H1 (cell line): ENCODE measurements at regions of chr2 and their contacts with region 1.

Region 1: DNA sequence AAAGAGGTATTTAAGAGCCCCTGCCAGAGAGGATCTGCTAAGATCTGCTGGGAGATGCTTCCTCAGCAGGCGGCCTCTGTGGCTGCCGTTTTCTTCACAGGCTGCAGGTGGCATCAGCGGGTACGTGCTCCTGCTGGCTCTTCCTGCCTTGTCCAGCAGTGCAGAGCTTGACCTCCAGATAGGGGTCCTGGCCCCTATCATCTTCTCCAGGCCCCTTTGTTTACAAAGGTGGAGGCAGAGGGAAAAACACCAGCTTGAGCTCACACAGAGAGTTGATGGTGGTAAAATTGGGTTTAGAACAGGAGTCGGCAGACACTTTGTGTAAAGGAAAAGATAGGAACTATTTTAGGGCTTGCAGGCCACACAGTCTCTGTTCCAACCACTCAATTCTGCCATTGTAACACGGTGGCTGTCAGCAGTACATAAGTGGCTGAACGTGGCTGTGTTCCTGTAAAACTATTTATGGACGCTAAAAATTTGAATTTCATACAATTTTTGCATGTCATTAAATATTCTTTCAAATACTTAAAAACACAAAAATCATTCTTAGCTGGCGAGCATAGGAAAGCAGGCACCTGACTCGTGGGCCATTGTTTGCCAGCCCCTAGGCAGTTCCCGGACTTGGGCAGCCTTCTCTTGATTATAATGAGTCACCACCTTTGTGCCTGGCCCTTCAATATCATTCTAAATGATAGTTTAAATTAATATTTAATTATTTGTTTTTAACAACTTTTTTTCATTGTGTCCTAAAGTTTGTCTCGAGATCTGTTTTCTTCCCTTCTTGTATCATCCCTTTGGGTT is 98.2 kb upstream of the B3GNT7 start:
- DNase-seq: peak; percentile 31 to 77
- H3K4me3 ChIP-seq: no peak overlapping the region
- H3K27ac ChIP-seq: no peak overlapping the region
- H3K4me1 ChIP-seq: peaks cover 0 to 9% (median 3%) of the 10 kb centered on the region in 4 experiments; a peak in 2 of 7 replicates
- H3K27me3 ChIP-seq: no peaks in the 10 kb centered on the region
- CTCF ChIP-seq: peak; percentile 89 to 96 (median 90)
- EP300 ChIP-seq: no peak
- POLR2A ChIP-seq: no peak
- RAD21 ChIP-seq: peak; percentile 84

Region 2: DNA sequence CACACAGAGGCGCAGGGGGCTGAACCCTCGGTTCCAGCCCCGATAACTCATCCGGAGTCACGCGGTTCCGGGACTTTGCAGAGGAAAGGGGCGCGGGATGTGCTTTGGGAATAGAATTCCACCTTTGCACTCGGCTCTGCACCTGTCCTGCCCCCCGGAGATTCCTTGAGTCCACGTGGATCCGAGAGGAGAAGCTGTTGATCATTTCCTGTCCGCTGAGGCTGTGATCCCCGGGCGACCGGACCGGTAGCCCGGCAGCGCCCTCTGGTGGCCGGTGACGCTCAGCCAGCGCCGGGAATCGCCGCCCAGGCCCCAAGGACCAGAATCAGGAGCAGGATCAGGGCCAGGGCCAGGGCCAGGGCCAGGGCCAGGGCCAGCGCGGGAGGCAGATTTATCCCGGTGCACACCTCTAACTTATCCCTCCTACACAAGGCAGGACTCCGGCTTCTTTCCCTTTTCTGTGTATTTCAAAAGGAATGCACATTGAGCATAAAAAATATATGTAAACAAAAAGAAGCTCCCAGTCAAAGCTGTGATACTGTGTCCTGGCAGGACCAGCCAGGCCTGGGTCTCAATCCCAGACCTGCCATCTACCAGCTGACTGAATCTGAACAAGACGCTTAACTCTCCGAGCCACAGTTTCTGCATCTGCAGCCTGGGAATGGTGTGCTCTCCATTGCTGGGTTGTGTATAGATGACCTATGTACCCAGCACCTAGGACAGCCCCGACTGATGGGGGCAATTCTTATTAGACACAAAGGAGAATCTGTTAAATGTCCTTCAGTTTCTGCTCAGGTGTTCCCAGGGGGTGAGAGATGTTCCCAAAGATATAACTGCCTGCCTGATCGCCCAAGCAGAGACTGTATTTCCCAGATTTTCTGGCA is 309.9 kb before region 1 on chr2:
- CTCF ChIA-PET with region 1: no interaction called
- POLR2A ChIA-PET with region 1: no interaction called
- DNase-seq: peak; percentile 38 to 98
- H3K4me3 ChIP-seq: peak overlapping the region in 3 of 4 experiments; percentile 30 to 52 (median 30); a peak in 6 of 8 replicates
- H3K27ac ChIP-seq: no peak overlapping the region
- H3K4me1 ChIP-seq: peaks cover 0 to 11% (median 5%) of the 10 kb centered on the region in 4 experiments; a peak in 5 of 7 replicates
- H3K27me3 ChIP-seq: peaks cover 0 to 4% (median 2%) of the 10 kb centered on the region in 4 experiments; a peak in 2 of 7 replicates
- CTCF ChIP-seq: peak; percentile 93 to 97 (median 95)
- EP300 ChIP-seq: no peak
- POLR2A ChIP-seq: no peak
- RAD21 ChIP-seq: peak; percentile 92 to 94

Region 3: GRCh38 chr2:231037731-231038482 is 259.4 kb before region 1 on chr2:
- CTCF ChIA-PET with region 1: no interaction called
- POLR2A ChIA-PET with region 1: no interaction called
- DNase-seq: peak in 1 of 2 experiments; percentile 58
- H3K4me3 ChIP-seq: peak overlapping the region; percentile 33 to 71 (median 46)
- H3K27ac ChIP-seq: no peak overlapping the region
- H3K4me1 ChIP-seq: peaks cover 0 to 6% (median under 1%) of the 10 kb centered on the region in 4 experiments; a peak in 4 of 7 replicates
- H3K27me3 ChIP-seq: peaks cover 24 to 36% (median 33%) of the 10 kb centered on the region in 4 experiments
- CTCF ChIP-seq: peak; percentile 1 to 33 (median 7)
- EP300 ChIP-seq: no peak
- POLR2A ChIP-seq: no peak
- RAD21 ChIP-seq: no peak; a peak in 1 of 4 replicates

Region 4: DNA sequence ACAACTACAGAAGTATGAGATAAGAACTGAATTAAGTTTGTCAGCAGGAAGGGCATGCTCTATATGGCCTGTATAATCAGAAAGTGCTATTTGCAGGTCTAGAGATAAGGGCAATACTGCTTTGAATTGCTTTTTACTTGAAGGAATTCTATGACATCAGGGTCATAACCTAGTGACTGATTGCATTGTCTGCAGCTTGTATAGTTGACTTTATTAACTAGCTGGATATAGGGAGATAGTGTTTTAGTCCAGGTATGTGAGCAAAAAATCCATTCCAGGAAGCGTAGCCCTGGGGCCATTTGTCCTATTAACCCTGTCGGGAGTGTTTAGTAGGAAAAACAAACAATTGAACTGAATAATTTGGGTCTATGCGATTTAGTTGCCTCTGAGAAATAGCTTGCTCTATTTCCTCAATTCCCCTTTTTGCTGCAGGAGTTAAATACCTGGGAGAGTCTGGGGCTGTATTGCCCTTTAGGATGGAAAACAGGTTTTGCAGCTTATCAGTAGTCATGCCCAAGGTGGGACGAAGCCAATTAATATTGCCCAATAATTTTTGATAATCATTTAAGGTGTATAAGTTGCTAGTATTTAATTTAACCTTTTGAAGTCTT is 202.5 kb before region 1 on chr2:
- CTCF ChIA-PET with region 1: no interaction called
- POLR2A ChIA-PET with region 1: no interaction called
- DNase-seq: no peak
- H3K4me3 ChIP-seq: no peak overlapping the region
- H3K27ac ChIP-seq: no peak overlapping the region
- H3K4me1 ChIP-seq: no peaks in the 10 kb centered on the region
- H3K27me3 ChIP-seq: no peaks in the 10 kb centered on the region
- CTCF ChIP-seq: no peak
- EP300 ChIP-seq: no peak
- POLR2A ChIP-seq: no peak
- RAD21 ChIP-seq: no peak

Region 5: DNA sequence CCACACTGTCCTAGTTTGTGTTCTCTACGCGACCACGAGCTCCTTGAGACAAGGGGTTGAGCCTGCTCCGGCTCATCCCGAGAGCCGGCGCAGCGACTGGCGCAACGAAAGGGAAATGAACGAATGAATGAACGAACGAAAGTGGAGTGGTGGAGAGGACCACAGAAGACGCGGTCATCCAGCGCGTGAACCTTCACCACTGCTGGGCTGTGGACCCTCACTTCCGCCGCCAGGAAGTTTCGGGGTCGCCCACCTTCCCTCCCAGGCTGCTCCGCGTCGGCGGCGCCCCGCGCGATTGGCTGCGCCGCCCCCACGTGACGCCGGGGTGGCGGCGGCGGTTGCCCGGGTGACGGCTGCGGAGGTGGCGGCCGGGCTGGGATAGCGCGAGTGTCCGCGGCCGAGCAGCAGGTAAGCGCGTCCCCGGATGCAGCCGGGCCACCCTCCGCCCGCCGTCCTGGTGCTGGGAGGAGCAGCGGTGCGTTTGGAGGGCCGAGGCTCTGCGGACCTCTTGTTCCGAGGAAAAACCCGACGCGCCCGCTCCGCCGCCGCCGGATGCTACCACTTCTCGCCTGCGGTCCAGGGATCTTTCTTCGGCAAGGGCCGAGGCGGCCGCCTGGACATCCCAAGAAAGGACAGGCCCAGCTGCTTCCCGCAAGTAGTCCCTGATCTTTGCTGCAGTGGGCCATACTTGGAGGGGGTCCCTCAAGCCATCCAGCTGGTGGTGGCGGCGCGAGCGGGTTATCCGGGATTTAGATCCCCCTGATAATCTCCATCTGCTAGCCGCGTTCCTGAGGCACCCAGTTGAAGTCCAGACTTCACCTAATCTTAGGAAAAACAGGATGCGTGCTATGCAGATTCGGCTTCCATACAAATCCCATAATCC is 98.8 kb before region 1 on chr2 and contains the start of gene ARMC9:
- CTCF ChIA-PET with region 1: no interaction called
- POLR2A ChIA-PET with region 1: no interaction called
- DNase-seq: peak in 1 of 2 experiments; percentile 91
- H3K4me3 ChIP-seq: peak within 1 kb of the TSS; percentile 79 to 91 (median 88)
- H3K27ac ChIP-seq: peak within 1 kb of the TSS; percentile 62
- H3K4me1 ChIP-seq: peaks cover 0 to 5% (median 2%) of the 10 kb centered on the region in 4 experiments; a peak in 3 of 7 replicates
- H3K27me3 ChIP-seq: no peaks in the 10 kb centered on the region
- CTCF ChIP-seq: no peak
- EP300 ChIP-seq: no peak
- POLR2A ChIP-seq: peak in 1 of 2 experiments; percentile 88; a peak in 2 of 3 replicates
- RAD21 ChIP-seq: no peak
- total RNA-seq, gene ARMC9: 33.0 and 36.1 TPM in 2 replicates

Region 6: GRCh38 chr2:231308631-231309428 is 11.5 kb after region 1 on chr2:
- CTCF ChIA-PET with region 1: interaction called, 28 read pairs
- POLR2A ChIA-PET with region 1: interaction called, 4 read pairs
- DNase-seq: no peak
- H3K4me3 ChIP-seq: no peak overlapping the region
- H3K27ac ChIP-seq: no peak overlapping the region
- H3K4me1 ChIP-seq: no peaks in the 10 kb centered on the region; a peak in 1 of 7 replicates
- H3K27me3 ChIP-seq: no peaks in the 10 kb centered on the region
- CTCF ChIP-seq: no peak
- EP300 ChIP-seq: no peak
- POLR2A ChIP-seq: no peak
- RAD21 ChIP-seq: no peak

Region 7: GRCh38 chr2:231334179-231334930 is 37.0 kb after region 1 on chr2:
- CTCF ChIA-PET with region 1: interaction called, 17 read pairs
- POLR2A ChIA-PET with region 1: no interaction called
- DNase-seq: no peak
- H3K4me3 ChIP-seq: no peak overlapping the region
- H3K27ac ChIP-seq: no peak overlapping the region
- H3K4me1 ChIP-seq: peaks cover 0 to 3% (median 1%) of the 10 kb centered on the region in 4 experiments; a peak in 2 of 7 replicates
- H3K27me3 ChIP-seq: no peaks in the 10 kb centered on the region
- CTCF ChIP-seq: no peak
- EP300 ChIP-seq: no peak
- POLR2A ChIP-seq: no peak
- RAD21 ChIP-seq: no peak

Region 8: GRCh38 chr2:231394211-231395141 is 97.2 kb after region 1 on chr2:
- CTCF ChIA-PET with region 1: interaction called, 37 read pairs
- POLR2A ChIA-PET with region 1: interaction called, 4 read pairs
- DNase-seq: peak in 1 of 2 experiments; percentile 78
- H3K4me3 ChIP-seq: peak overlapping the region in 2 of 4 experiments; percentile 46 to 74; a peak in 5 of 8 replicates
- H3K27ac ChIP-seq: no peak overlapping the region
- H3K4me1 ChIP-seq: peaks cover 3 to 37% (median 20%) of the 10 kb centered on the region in 4 experiments
- H3K27me3 ChIP-seq: no peaks in the 10 kb centered on the region
- CTCF ChIP-seq: peak in 2 of 3 experiments; percentile 67 to 78; a peak in 3 of 4 replicates
- EP300 ChIP-seq: no peak
- POLR2A ChIP-seq: no peak
- RAD21 ChIP-seq: peak; percentile 58 to 75

Region 9: GRCh38 chr2:231418820-231419640 is 121.7 kb after region 1 on chr2:
- CTCF ChIA-PET with region 1: interaction called, 13 read pairs
- POLR2A ChIA-PET with region 1: no interaction called
- DNase-seq: no peak
- H3K4me3 ChIP-seq: no peak overlapping the region
- H3K27ac ChIP-seq: no peak overlapping the region
- H3K4me1 ChIP-seq: peaks cover 1 to 6% (median 4%) of the 10 kb centered on the region in 4 experiments; a peak in 6 of 7 replicates
- H3K27me3 ChIP-seq: no peaks in the 10 kb centered on the region
- CTCF ChIP-seq: no peak
- EP300 ChIP-seq: no peak
- POLR2A ChIP-seq: no peak
- RAD21 ChIP-seq: no peak